Spleen (tissue), 13 donors: ENCODE measurements at regions of chr11 and their contacts with region 1.

Region 1: GRCh38 chr11:126329644-126330211 is 25.8 kb upstream of the ST3GAL4 start:
- DNase-seq: no peak
- H3K4me3 ChIP-seq: no peak overlapping the region
- H3K27ac ChIP-seq: peak overlapping the region in 6 of 8 donors; percentile 12 to 65 (median 46)
- H3K4me1 ChIP-seq: peaks cover 3 to 70% (median 22%) of the 10 kb centered on the region in 6 donors
- H3K27me3 ChIP-seq: no peaks in the 10 kb centered on the region
- CTCF ChIP-seq: no peak
- POLR2A ChIP-seq: no peak

Region 2: GRCh38 chr11:126419801-126420697 is 90.3 kb after region 1 on chr11:
- intact Hi-C with region 1: loop called (anchors 10 kb)
- DNase-seq: no peak
- H3K4me3 ChIP-seq: no peak overlapping the region
- H3K27ac ChIP-seq: peak overlapping the region in 7 of 8 donors; percentile 64 to 83 (median 79)
- H3K4me1 ChIP-seq: peaks cover 24 to 95% (median 66%) of the 10 kb centered on the region in 6 donors
- H3K27me3 ChIP-seq: peaks cover 0 to 6% (median 0%) of the 10 kb centered on the region in 7 donors
- CTCF ChIP-seq: no peak
- POLR2A ChIP-seq: no peak